BJ (cell line): ENCODE measurements at regions of chr14 and their contacts with region 1.

Region 1: GRCh38 chr14:71117839-71118743 is 210.8 kb downstream of the PCNX1 start:
- DNase-seq: no peak
- H3K4me3 ChIP-seq: no peak overlapping the region
- H3K27me3 ChIP-seq: no peaks in the 10 kb centered on the region
- CTCF ChIP-seq: no peak

Region 2: DNA sequence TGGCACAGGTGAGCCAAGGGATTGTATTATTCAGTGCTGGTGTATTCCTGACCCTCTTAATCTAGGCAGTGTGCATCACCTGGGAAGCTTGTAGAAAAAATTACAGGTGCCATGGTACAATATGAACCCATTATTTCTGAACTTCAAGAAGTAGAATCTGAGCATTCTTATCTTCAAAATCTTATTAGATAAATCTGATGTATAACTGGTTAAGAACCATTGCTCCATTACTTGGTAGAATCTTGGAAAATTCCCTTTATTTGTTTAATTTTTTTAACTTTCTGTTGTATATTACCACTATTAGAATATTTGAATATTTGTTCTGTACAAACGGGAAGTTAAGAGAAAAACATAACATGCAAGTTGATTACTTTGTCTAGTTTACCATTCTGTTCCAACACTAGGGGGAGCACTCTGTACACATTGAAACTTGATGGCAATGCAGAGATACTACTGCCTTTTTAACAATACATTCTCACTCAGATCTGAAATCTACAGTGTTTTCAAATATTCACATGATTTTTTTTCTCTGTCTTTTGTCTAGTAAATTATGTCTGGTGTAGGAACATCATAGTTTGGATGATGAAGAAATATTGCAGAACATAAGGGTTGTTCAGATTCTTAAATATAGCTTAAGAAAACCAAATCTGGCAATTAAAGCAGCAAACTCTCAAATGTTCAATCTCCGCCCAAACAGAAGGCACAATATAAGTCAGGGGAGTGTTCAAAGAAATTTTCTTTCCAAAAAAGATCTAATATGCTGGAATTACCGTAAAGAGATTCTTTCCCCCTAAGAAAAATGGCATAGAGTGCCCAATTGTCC is 14.2 kb before region 1 on chr14:
- CTCF ChIA-PET with region 1: interaction called, 18 read pairs
- POLR2A ChIA-PET with region 1: no interaction called
- DNase-seq: no peak
- H3K4me3 ChIP-seq: no peak overlapping the region
- H3K27me3 ChIP-seq: no peaks in the 10 kb centered on the region
- CTCF ChIP-seq: peak; percentile 78